ENCODE measurements at regions of chr5 and their contacts with region 1.

Region 1: GRCh38 chr5:131165119-131165727 is at the start of gene HINT1:
- DNase-seq: peak; percentile 89 to 94 (median 92)
- H3K4me3 ChIP-seq: peak within 1 kb of the TSS; percentile 79
- H3K27ac ChIP-seq: peak within 1 kb of the TSS; percentile 86 to 87
- H3K4me1 ChIP-seq: no peaks in the 10 kb centered on the region
- H3K27me3 ChIP-seq: no peaks in the 10 kb centered on the region
- CTCF ChIP-seq: no peak
- EP300 ChIP-seq: no peak
- POLR2A ChIP-seq: peak; percentile 79
- total RNA-seq, gene HINT1: 103 to 199 (median 144) TPM

Region 2: DNA sequence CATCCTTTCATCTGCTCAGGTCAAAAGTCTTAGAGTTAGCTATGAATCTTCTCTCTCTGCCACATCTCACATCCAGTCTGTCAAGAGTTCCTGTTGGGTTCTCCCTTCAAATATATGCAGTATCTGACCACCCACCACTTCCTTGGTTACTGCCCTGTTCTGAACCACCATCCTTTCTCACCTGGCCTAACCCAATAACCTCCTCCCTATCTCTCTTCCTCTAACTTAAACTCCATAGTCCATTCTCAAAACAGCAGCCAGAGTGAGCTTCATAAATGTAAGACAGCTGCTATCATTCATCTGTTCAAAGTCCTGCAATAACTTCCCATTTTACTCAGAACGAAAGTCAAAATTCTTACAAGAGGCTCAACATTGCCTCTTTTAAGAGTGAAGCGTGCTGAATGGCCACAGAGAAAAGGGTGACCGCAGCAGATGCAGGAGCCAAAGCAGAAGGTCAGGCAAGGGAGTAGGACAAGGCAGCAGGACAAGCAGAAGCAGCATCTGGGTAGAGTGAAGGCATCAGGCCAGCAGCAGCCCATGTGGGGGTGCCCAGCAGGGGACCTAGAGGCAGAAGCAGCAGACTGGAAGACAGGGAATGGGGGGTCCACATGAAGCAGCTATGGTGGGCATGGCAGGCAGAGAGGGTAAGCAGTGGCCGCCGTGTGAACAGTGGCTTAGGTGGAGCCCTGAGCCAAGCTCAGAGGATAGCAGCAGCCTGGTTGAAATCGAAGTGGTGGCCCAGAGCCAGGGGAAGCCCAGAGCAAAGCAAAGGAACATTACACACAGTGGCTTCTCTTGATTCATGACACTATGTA is 59.4 kb after region 1 on chr5:
- intact Hi-C with region 1: no loop called
- DNase-seq: no peak
- H3K4me3 ChIP-seq: no peak overlapping the region
- H3K27ac ChIP-seq: no peak overlapping the region
- H3K4me1 ChIP-seq: no peaks in the 10 kb centered on the region
- H3K27me3 ChIP-seq: no peaks in the 10 kb centered on the region
- CTCF ChIP-seq: no peak
- EP300 ChIP-seq: no peak
- POLR2A ChIP-seq: no peak

Region 3: GRCh38 chr5:131263648-131264450 is 98.6 kb after region 1 on chr5 and contains the start of gene CDC42SE2:
- intact Hi-C with region 1: loop called in 3 of 4 experiments (anchors 10 kb)
- DNase-seq: peak; percentile 84 to 91 (median 88)
- H3K4me3 ChIP-seq: peak within 1 kb of the TSS; percentile 73
- H3K27ac ChIP-seq: peak within 1 kb of the TSS; percentile 69 to 88
- H3K4me1 ChIP-seq: peaks cover 4% of the 10 kb centered on the region
- H3K27me3 ChIP-seq: no peaks in the 10 kb centered on the region
- CTCF ChIP-seq: peak in 1 of 3 donors; percentile 16
- EP300 ChIP-seq: no peak
- POLR2A ChIP-seq: peak; percentile 85
- total RNA-seq, gene CDC42SE2: 18.0 to 37.6 (median 23.7) TPM

Region 4: GRCh38 chr5:131417240-131417869 is 252.1 kb after region 1 on chr5:
- intact Hi-C with region 1: loop called in 2 of 4 experiments (anchors 5 to 10 kb)
- DNase-seq: peak; percentile 69 to 85 (median 83)
- H3K4me3 ChIP-seq: no peak overlapping the region
- H3K27ac ChIP-seq: no peak overlapping the region
- H3K4me1 ChIP-seq: no peaks in the 10 kb centered on the region
- H3K27me3 ChIP-seq: no peaks in the 10 kb centered on the region
- CTCF ChIP-seq: peak; percentile 50 to 68 (median 63)
- EP300 ChIP-seq: no peak
- POLR2A ChIP-seq: no peak